ENCODE measurements at regions of chr11 and their contacts with region 1.

Region 1: DNA sequence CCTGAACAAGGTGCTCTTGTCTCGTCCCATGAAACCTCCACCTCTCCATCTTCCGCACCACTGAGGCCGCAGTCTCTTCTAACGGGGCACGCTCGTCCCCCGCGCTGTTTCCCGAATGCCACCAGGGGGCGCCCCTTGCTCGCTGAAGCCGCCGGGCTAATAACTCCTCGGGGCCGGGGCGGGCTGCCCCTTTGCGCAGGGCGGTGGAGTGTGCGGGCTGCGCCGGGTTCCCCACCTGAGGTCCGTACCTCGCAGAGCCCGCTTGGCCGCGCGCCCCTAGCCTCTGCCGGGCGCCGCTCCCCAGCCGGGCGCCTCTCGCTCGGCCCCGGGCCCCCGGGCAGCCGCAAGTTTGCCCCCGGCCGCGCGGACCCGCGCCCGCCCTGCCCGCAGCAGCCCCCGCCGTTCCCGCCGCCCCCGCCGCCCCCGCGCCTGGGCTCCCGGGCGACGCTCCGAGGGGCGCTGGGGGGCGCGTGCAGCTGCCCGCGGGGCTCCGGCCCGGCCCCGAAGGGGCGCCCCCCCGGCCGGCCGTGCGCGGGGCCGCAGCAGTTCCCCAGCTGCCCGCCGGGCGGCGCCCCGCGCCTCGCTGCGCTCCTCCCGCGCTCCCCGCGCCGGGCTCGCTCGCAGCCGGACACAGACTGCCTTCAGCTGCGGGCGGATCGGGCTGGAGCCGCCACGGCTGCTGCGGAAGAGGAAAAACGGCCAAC is at the start of gene GRIK4:
- DNase-seq: peak; percentile 73
- H3K4me3 Mint-ChIP-seq: no peak within 1 kb of the TSS
- H3K27ac Mint-ChIP-seq: no peak within 1 kb of the TSS
- H3K4me1 Mint-ChIP-seq: peaks cover 1% of the 10 kb centered on the region
- H3K27me3 Mint-ChIP-seq: peaks cover 47% of the 10 kb centered on the region
- total RNA-seq, gene GRIK4: not detected

Region 2: DNA sequence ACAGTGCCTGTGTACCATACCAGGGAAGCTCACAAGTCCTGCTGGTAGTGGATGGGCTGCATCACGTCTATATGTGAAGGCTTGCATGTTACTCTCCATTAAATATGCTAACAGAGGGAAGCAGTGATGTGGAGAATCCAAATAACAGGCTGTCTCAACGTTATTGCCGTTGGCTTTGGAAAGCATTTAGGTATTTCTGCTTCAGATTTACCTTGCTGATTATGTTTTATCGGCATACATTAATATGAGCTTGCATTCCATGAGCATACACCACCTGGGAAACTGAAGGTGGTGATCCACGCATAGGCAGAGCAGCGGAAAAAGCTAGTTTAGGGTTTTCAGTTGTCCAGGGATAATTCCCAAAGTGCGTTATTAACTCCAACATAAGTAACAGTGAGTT is 175.2 kb after region 1 on chr11:
- CTCF ChIA-PET with region 1: interaction called, 11 read pairs
- POLR2A ChIA-PET with region 1: no interaction called
- DNase-seq: no peak
- H3K4me3 Mint-ChIP-seq: no peak overlapping the region
- H3K27ac Mint-ChIP-seq: no peak overlapping the region
- H3K4me1 Mint-ChIP-seq: no peaks in the 10 kb centered on the region
- H3K27me3 Mint-ChIP-seq: peaks cover 30% of the 10 kb centered on the region